Endothelial cell of umbilical vein (primary cell): ENCODE measurements at regions of chr21 and their contacts with region 1.

Region 1: DNA sequence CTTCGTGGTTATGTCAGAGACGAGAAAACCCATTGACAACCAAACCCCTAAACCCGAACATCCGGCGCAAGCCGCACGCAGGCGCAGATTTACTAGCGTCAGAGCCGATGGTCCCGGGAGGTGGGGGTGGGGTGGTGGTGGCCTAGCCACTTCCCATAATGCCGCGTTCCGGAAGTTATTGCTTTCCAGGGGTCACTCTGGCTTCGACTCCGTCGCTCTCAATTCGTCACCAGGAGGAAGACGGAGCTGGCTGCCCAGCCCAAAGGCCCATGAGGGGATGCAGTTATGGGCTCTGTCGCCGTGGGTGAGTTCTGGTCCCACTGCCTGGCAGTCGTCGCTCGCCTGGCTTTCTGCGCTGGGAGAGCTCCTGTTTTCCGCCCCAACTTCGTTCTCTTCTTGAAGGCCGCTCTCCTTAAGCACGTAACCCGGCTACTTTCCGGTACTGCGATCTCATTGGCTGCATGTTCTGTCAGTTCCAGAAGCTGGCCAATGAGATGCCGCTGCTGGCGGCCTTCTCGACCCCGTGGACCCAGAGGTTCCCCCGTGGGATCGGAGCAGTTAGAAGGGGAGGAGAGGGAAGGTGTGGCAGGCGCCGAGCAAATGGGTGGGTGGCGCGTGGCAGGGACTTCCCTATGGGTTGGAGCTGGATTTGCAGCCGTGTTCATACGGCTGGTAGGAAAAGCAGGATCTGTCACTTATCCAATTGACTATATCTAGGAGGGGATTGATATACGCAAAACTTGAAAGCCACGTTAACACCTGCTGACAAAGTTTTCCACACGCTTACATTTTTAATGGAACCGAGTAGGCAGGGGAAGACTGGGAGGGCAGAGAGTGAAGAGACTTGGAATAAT is at the start of gene USP16:
- DNase-seq: peak; percentile 100
- H3K4me3 ChIP-seq: peak within 1 kb of the TSS; percentile 33 to 80 (median 66)
- H3K27ac ChIP-seq: peak within 1 kb of the TSS; percentile 88
- H3K4me1 ChIP-seq: peaks cover 8% of the 10 kb centered on the region
- H3K27me3 ChIP-seq: no peaks in the 10 kb centered on the region
- CTCF ChIP-seq: no peak
- POLR2A ChIP-seq: peak; percentile 62
- total RNA-seq, gene USP16: 29.3 and 31.3 TPM in 2 replicates

Region 2: GRCh38 chr21:28884976-28885852 is 139.5 kb before region 1 on chr21:
- CTCF ChIA-PET with region 1: no interaction called
- POLR2A ChIA-PET with region 1: no interaction called
- dilution Hi-C with region 1: no loop called
- intact Hi-C with region 1: loop called (anchors 1 kb)
- DNase-seq: peak; percentile 93
- H3K4me3 ChIP-seq: peak overlapping the region; percentile 42 to 84 (median 55)
- H3K27ac ChIP-seq: peak overlapping the region; percentile 48
- H3K4me1 ChIP-seq: peaks cover 6% of the 10 kb centered on the region
- H3K27me3 ChIP-seq: peaks cover 0 to 9% of the 10 kb centered on the region in 2 experiments
- CTCF ChIP-seq: no peak
- POLR2A ChIP-seq: peak; percentile 86

Region 3: GRCh38 chr21:28992526-28993292 is 32.0 kb before region 1 on chr21 and contains the start of gene LTN1:
- CTCF ChIA-PET with region 1: interaction called, 4 read pairs
- POLR2A ChIA-PET with region 1: interaction called, 7 read pairs
- dilution Hi-C with region 1: no loop called
- intact Hi-C with region 1: loop called (anchors 1 kb)
- DNase-seq: peak; percentile 100
- H3K4me3 ChIP-seq: peak within 1 kb of the TSS; percentile 71 to 89 (median 80)
- H3K27ac ChIP-seq: peak within 1 kb of the TSS; percentile 52
- H3K4me1 ChIP-seq: peaks cover 13% of the 10 kb centered on the region
- H3K27me3 ChIP-seq: no peaks in the 10 kb centered on the region
- CTCF ChIP-seq: no peak
- POLR2A ChIP-seq: peak; percentile 77
- total RNA-seq, gene LTN1: 21.5 and 23.0 TPM in 2 replicates

Region 4: GRCh38 chr21:29002442-29003144 is 22.1 kb before region 1 on chr21:
- CTCF ChIA-PET with region 1: interaction called, 7 read pairs
- POLR2A ChIA-PET with region 1: interaction called, 9 read pairs
- dilution Hi-C with region 1: no loop called
- intact Hi-C with region 1: loop called (anchors 1 kb)
- DNase-seq: peak; percentile 97
- H3K4me3 ChIP-seq: peak overlapping the region; percentile 50 to 89 (median 64)
- H3K27ac ChIP-seq: peak overlapping the region; percentile 86
- H3K4me1 ChIP-seq: peaks cover 8% of the 10 kb centered on the region
- H3K27me3 ChIP-seq: no peaks in the 10 kb centered on the region
- CTCF ChIP-seq: no peak
- POLR2A ChIP-seq: peak; percentile 99

Region 5: DNA sequence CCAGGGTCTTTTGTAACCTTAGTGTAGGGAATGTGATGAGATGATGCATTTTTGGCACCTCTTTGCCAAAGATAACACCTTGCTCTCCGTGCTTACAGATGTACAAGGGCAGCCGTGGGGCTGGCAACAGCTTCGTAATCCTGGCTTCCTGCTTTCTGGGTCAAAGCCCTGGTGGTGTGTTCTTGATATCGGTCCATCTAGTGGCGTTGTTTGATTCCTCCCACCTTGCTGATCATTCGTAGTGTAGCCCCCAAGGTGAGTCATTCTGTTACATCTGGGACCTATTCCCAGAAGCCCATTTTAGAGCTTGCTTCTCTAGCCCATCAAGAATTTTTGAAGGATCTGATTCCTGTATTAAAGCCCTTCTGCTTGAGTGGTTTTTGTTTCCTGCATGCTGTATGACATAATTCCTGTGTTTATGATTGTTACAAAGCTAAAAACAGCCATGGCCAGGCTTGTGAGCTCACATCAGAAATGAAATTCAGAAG is 55.8 kb after region 1 on chr21:
- CTCF ChIA-PET with region 1: no interaction called
- POLR2A ChIA-PET with region 1: no interaction called
- dilution Hi-C with region 1: no loop called
- intact Hi-C with region 1: no loop called
- DNase-seq: peak; percentile 28
- H3K4me3 ChIP-seq: no peak overlapping the region
- H3K27ac ChIP-seq: no peak overlapping the region
- H3K4me1 ChIP-seq: peaks cover 17% of the 10 kb centered on the region
- H3K27me3 ChIP-seq: no peaks in the 10 kb centered on the region
- CTCF ChIP-seq: no peak
- POLR2A ChIP-seq: no peak

Region 6: DNA sequence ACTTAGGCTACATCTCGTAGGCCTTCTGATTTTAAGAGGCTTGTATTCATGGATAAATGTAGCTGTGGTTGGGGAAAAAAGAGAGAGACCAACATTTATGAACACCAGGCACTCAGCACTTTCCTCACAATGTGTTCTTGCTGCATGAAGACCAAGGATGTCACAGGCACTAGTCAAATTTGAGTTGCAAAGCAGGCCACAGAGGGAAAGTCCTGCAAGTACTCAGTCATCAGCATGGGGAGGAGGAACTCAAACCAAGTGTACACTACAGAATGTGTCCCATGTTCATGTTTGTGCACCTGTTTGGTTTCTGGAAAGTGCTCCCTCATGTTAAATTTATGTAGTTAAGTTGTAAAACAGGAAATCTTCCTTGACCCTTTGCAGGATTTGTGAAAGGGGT is 97.1 kb after region 1 on chr21:
- CTCF ChIA-PET with region 1: no interaction called
- POLR2A ChIA-PET with region 1: no interaction called
- dilution Hi-C with region 1: no loop called
- intact Hi-C with region 1: no loop called
- DNase-seq: no peak
- H3K4me3 ChIP-seq: no peak overlapping the region
- H3K27ac ChIP-seq: no peak overlapping the region
- H3K4me1 ChIP-seq: no peaks in the 10 kb centered on the region
- H3K27me3 ChIP-seq: no peaks in the 10 kb centered on the region
- CTCF ChIP-seq: no peak
- POLR2A ChIP-seq: no peak